ENCODE measurements at regions of chr22 and their contacts with region 1.

Region 1: DNA sequence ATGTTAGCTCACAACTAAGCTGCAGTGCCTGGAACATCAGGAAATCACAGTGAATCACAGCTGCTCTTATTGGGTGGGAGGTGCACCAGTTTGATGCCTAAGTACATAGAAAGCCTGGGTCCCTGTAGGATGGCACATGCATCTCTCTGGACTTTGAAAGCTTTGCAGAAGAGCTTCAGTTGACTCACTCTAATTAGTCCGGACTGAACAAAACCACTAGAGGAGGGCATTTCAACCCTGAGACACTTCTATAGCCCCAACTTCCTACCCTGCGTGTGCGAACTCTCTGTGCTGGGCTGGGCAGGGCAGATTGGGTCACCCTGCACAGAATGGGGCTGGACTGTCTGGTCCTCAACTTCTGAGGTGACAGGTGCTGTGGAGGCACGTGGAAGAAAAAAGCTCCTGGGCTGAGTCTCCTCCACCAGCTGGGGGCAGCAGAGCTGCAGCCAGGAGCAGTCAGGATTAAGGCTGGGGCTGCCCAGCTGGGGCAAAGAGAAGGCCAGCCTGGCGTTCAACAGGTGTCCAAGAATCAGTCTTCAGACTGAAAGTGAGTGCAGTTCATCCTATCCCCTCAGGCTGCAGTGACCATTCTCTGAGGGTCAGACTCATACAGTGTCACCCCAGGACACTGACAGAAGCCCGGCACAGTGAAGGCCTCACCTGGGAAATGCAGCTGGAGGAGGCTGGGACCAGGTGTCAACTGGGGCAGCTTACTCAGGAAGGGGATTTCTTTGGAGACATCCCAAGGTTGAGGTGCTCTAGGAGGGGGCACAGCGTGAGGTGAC is 22.1 kb downstream of the GGTLC2 start:
- DNase-seq: peak; percentile 8 to 33
- ATAC-seq: peak; percentile 90 to 95
- H3K4me3 ChIP-seq: no peak overlapping the region
- H3K27ac ChIP-seq: no peak overlapping the region
- H3K4me1 ChIP-seq: no peaks in the 10 kb centered on the region
- CTCF ChIP-seq: peak; percentile 59
- EP300 ChIP-seq: no peak
- POLR2A ChIP-seq: no peak
- RAD21 ChIP-seq: peak; percentile 75

Region 2: GRCh38 chr22:22395245-22395644 is 271.3 kb before region 1 on chr22:
- CTCF ChIA-PET with region 1: no interaction called
- POLR2A ChIA-PET with region 1: no interaction called
- DNase-seq: no peak
- ATAC-seq: no peak
- H3K4me3 ChIP-seq: no peak overlapping the region
- H3K27ac ChIP-seq: no peak overlapping the region
- H3K4me1 ChIP-seq: peaks cover 12% of the 10 kb centered on the region
- CTCF ChIP-seq: no peak
- EP300 ChIP-seq: no peak
- POLR2A ChIP-seq: no peak
- RAD21 ChIP-seq: no peak

Region 3: DNA sequence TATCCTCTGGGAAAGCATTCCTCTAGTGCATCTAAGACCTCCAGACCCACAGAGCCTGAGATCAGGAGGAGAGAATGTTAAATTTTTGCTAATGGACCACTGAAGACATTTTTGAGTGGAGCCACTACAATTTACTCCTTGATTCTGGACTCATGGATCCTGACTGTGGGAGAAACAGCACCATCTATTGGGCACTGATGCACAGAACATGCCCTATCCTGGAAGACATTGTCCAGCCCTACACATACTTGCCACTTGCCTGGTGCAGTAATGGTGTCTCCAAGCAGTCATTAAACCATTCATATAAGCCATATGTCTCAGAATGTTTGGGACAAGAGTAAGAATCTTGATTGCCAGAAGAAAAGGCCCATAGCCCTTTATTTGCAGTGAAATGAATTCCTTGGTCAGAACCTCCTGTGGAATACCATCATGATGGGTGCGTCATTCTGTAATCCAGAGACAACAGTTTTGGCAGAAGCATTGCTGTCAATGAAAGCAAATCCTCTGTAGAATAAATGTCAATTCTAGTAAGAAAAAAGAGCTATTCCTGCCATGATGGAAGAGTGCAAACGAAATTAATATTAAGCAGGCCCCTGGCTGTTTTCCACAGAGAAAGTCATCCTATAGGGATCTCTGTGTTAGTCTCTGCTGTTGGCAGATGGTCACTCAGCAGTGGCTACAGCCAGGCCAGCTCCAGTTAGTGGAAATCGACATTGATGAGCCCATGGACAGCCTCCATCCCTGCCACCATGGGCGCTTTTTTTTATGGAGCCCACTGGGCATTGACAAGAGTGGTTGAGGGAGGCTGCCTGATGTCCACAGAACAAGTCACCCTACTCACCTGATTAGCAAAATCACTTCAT is 21.4 kb after region 1 on chr22:
- CTCF ChIA-PET with region 1: interaction called, 35 read pairs
- POLR2A ChIA-PET with region 1: no interaction called
- DNase-seq: peak in 1 of 2 experiments; percentile 52
- ATAC-seq: peak; percentile 64 to 85; a peak in 3 of 6 replicates
- H3K4me3 ChIP-seq: no peak overlapping the region
- H3K27ac ChIP-seq: peak overlapping the region in 1 of 2 experiments; percentile 29; a peak in 1 of 6 replicates
- H3K4me1 ChIP-seq: peaks cover 42% of the 10 kb centered on the region
- CTCF ChIP-seq: peak; percentile 55
- EP300 ChIP-seq: no peak
- POLR2A ChIP-seq: no peak
- RAD21 ChIP-seq: peak; percentile 52 to 66; a peak in 4 of 5 replicates

Region 4: DNA sequence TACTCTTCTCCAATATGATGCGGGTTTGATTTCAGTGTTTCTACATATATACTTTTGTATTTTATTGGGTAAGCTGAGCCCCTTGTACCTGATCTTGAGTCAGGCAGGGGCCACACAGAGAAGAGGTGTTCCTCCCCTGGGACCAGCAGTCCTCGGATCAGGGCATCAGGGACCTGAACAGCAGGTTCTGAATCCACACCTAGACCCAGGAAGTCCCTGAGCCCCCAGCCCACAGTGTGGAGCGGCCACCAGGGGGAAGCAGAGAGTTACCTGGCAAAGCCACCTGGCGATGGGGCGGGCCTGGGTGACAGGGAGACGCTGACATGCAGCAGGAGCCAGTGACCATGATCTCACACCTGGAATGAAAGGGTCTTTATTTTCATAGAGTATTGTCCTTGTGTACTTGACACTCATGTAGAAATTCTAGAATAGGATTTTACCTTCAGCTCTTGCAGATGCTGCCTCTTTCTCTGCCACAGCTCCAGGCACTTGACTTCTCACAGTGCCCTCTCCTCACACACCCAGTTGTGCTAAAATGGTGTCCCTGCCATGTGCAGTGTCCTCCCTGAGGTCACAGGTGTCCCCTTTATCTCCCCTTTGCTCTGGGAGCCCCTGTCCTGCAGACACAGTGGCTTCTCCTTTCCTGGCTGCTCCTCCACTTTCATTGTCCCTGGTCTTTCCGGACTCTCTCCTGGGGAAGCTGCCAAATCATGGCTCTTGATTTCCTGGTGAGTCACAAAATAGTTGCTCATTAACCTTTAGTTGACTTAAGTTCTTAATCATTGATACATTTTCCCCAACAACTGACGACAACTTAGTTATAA is 26.4 kb after region 1 on chr22:
- CTCF ChIA-PET with region 1: interaction called, 21 read pairs
- POLR2A ChIA-PET with region 1: no interaction called
- DNase-seq: peak; percentile 56 to 69
- ATAC-seq: peak; percentile 87 to 89
- H3K4me3 ChIP-seq: 0 out of 3 replicates have a peak overlapping the region, but pooled peaks have one; percentile 16
- H3K27ac ChIP-seq: peak overlapping the region; percentile 89 to 90
- H3K4me1 ChIP-seq: peaks cover 42% of the 10 kb centered on the region
- CTCF ChIP-seq: peak; percentile 67
- EP300 ChIP-seq: no peak
- POLR2A ChIP-seq: no peak
- RAD21 ChIP-seq: peak; percentile 53 to 60; a peak in 4 of 5 replicates

Region 5: GRCh38 chr22:22710719-22711531 is 44.4 kb after region 1 on chr22:
- CTCF ChIA-PET with region 1: interaction called, 13 read pairs
- POLR2A ChIA-PET with region 1: no interaction called
- DNase-seq: peak; percentile 37 to 46
- ATAC-seq: peak; percentile 79 to 94
- H3K4me3 ChIP-seq: no peak overlapping the region
- H3K27ac ChIP-seq: peak overlapping the region; percentile 58 to 67; a peak in 5 of 6 replicates
- H3K4me1 ChIP-seq: peaks cover 18% of the 10 kb centered on the region
- CTCF ChIP-seq: peak; percentile 74
- EP300 ChIP-seq: no peak
- POLR2A ChIP-seq: no peak
- RAD21 ChIP-seq: peak; percentile 31 to 37; a peak in 3 of 5 replicates

Region 6: DNA sequence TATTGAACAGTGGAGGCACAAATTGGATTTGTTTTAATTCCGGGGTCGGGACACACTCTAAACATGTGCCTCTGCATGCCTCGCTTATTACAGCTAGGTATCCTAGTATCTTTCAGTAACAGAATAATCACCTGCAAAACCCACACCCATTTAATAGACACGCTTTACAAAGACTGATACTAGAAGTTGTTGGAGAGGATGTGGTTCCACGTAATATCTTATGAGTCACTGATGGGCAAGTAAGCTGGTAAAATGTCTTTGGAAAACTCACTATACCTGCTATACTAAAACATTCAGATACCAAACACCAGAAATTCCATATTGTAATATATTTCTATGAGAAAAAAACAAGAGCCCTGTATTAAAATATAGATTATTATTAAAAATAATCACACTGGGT is 61.9 kb after region 1 on chr22:
- CTCF ChIA-PET with region 1: interaction called, 11 read pairs
- POLR2A ChIA-PET with region 1: no interaction called
- DNase-seq: no peak
- ATAC-seq: no peak
- H3K4me3 ChIP-seq: no peak overlapping the region
- H3K27ac ChIP-seq: no peak overlapping the region
- H3K4me1 ChIP-seq: no peaks in the 10 kb centered on the region
- CTCF ChIP-seq: no peak
- EP300 ChIP-seq: no peak
- POLR2A ChIP-seq: no peak
- RAD21 ChIP-seq: no peak